ENCODE measurements at regions of chr12 and their contacts with region 1.

Region 1: DNA sequence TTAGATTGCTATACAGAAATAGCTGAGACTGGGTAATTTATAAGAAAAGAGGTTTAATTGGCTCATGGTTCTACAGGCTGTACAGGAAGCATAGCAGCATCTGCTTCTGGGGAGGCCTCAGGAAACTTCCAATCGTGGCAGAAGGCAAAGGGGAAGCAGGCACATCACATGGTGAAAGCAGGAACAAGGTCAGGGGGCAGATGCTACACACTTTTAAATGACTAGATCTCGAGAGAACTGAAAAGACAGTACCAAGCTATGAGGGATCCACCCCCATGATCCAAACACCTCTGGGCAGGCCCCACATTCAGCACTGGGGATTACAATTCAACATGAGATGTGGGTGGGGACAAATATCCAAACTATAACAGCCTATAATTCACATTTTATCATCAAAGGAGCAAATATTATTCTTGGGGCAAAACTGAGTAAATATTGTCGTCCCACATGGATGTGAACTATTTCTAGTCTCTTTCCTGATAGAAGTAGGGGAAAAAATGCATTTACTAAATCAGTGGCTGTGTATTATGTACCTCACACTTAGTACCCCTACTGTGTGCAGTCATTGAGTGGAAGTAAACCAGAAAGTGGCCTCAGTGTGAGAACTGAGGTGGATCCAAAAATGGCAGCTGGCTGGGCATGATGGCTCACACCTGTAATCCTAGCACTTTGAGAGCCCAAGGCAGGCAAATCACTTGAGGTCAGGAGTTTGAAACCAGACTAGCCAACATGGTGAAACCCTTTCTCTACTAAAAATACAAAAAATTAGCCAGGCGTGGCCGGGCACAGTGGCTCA is 25.4 kb upstream of the A2ML1 start:
- DNase-seq: no peak
- ATAC-seq: no peak
- H3K4me3 ChIP-seq: no peak overlapping the region
- H3K27ac ChIP-seq: no peak overlapping the region
- H3K4me1 ChIP-seq: no peaks in the 10 kb centered on the region
- H3K27me3 ChIP-seq: no peaks in the 10 kb centered on the region
- CTCF ChIP-seq: no peak
- EP300 ChIP-seq: no peak
- POLR2A ChIP-seq: no peak
- RAD21 ChIP-seq: no peak

Region 2: DNA sequence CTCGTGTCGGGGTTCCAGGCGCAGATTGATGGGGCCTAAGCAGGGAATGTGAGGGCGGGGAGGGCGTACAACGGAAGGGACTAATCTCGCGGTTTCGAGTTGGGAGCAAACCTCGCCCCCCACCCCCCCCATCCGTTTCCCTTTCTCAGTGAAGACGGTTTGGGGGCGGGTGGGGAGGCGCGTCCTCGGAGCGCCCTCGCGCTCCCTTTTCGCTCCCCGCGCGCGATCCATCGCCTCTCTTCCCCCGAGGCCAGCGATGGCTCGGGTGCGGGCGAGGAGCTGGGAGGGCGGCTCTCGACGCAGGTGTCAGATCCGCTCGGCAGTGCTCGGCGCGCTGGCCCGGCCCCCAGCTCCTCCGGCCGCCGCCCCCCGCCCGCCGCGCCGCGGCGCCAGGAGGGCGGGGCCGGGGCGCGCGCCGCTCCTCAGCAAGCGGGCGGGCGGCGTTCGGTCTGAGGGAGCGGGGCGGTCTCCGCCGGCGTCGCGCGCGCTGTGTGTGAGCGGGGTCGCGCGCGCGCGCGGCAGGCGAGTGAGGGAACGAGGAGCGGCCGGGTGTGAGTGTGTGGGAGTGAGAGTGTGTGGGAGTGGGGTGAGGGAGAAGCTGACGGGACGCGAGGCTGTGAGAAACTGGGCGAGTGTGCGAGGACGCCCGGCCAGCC is 99.4 kb before region 1 on chr12 and contains the start of gene RIMKLB:
- CTCF ChIA-PET with region 1: no interaction called
- POLR2A ChIA-PET with region 1: no interaction called
- in situ Hi-C with region 1: loop called (anchors 5 kb)
- intact Hi-C with region 1: no loop called
- DNase-seq: peak; percentile 78 to 87 (median 80)
- ATAC-seq: peak; percentile 83
- H3K4me3 ChIP-seq: peak within 1 kb of the TSS; percentile 87
- H3K27ac ChIP-seq: peak within 1 kb of the TSS; percentile 89
- H3K4me1 ChIP-seq: peaks cover 8 to 15% of the 10 kb centered on the region in 2 experiments; a peak in 4 of 5 replicates
- H3K27me3 ChIP-seq: no peaks in the 10 kb centered on the region
- CTCF ChIP-seq: no peak
- EP300 ChIP-seq: no peak
- POLR2A ChIP-seq: peak; percentile 78; the same call in 1 of the 2 replicates
- RAD21 ChIP-seq: no peak
- polyA plus RNA-seq, gene RIMKLB: 6.5 to 9.1 TPM

Region 3: DNA sequence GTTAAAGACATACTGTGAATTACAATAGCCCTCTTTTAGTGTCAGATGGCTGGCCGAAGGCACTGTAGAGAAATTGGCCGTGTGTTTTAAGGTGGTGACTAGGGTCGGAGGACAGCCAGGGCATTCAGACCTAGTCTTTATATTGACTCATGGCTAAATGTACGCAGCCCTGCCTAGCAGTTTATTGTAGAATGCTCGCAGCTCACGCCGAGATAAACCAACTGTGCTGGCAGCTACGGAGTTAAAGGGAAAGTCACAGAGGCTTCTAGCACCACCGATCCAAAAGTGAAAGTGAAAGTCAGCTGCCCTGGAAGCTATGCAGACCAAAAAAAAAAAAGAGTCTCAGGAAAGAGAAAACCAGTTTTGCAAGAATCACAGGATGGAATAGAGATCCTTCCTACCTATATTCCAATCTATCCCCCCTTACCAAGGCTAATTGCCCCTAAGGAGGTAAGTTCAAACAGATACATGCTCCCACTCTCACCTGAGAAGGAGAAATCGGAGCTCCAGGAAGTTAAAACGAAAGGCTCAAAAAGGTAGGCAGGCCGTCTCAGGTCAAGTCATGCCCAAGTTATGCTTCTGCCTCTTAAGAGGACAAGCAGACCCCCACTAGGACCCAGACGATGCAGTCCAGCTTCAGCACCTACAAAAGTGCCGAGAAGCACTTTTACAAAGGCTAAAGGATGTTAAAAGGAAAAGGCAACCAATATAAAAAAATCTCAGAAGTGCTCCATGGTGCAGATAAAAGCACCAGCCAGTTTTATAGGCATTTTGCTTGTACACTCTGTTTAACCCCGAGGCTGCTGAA is 1568.0 kb after region 1 on chr12:
- CTCF ChIA-PET with region 1: no interaction called
- POLR2A ChIA-PET with region 1: no interaction called
- in situ Hi-C with region 1: no loop called
- intact Hi-C with region 1: no loop called
- DNase-seq: peak in 2 of 4 experiments; percentile 50 to 73
- ATAC-seq: peak; percentile 64
- H3K4me3 ChIP-seq: peak overlapping the region; percentile 65
- H3K27ac ChIP-seq: peak overlapping the region; percentile 99
- H3K4me1 ChIP-seq: peaks cover 2 to 24% of the 10 kb centered on the region in 2 experiments; a peak in 4 of 5 replicates
- H3K27me3 ChIP-seq: no peaks in the 10 kb centered on the region
- CTCF ChIP-seq: no peak
- EP300 ChIP-seq: no peak
- POLR2A ChIP-seq: no peak; the same call in 1 of the 2 replicates
- RAD21 ChIP-seq: no peak

Measured in K562 (cell line).